A673 (cell line): ENCODE measurements at regions of chr3 and their contacts with region 1.

Region 1: GRCh38 chr3:56443372-56443771 is 24.9 kb downstream of the ERC2 start:
- DNase-seq: no peak
- H3K4me3 ChIP-seq: no peak overlapping the region
- H3K27ac ChIP-seq: no peak overlapping the region
- H3K4me1 ChIP-seq: no peaks in the 10 kb centered on the region
- H3K27me3 ChIP-seq: no peaks in the 10 kb centered on the region
- CTCF ChIP-seq: no peak

Region 2: DNA sequence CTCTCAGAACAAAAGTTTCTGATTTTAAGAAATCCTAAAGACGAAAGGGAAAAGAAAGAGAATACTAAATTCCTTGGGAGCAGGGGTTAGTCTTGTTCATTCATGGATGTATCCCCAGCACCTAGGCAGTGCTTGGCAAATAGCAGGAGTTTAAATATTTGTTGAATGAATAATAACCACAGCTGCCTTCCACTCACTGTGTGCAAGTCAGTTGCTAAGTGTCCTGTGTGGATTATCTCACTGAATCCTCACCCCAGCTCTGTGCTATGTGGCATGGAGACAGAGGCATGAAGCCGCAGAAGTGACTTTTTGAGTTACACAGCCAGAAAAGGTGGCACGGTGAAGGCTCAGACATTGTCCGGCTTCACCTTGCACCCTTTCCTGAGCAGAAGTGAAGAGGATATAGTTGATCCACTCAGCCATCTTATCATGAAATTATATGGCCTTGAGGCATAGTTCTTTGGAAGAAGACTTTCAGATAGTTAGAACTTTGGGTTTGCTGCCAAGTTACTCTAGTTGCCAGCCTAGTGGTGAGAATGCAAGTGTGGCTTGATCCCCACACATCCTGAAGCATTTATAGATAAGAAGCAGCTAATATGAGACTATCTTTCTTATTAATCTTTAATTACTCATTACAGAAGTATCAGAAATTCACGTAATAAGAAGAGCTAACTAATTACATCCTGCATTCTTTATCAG is 1871.0 kb before region 1 on chr3:
- CTCF ChIA-PET with region 1: no interaction called
- POLR2A ChIA-PET with region 1: no interaction called
- intact Hi-C with region 1: no loop called
- DNase-seq: no peak
- H3K4me3 ChIP-seq: no peak overlapping the region
- H3K27ac ChIP-seq: no peak overlapping the region
- H3K4me1 ChIP-seq: no peaks in the 10 kb centered on the region
- H3K27me3 ChIP-seq: no peaks in the 10 kb centered on the region
- CTCF ChIP-seq: no peak

Region 3: GRCh38 chr3:56003129-56003528 is 440.2 kb before region 1 on chr3:
- CTCF ChIA-PET with region 1: no interaction called
- POLR2A ChIA-PET with region 1: no interaction called
- intact Hi-C with region 1: no loop called
- DNase-seq: no peak
- H3K4me3 ChIP-seq: no peak overlapping the region
- H3K27ac ChIP-seq: no peak overlapping the region
- H3K4me1 ChIP-seq: no peaks in the 10 kb centered on the region
- H3K27me3 ChIP-seq: no peaks in the 10 kb centered on the region
- CTCF ChIP-seq: no peak

Region 4: DNA sequence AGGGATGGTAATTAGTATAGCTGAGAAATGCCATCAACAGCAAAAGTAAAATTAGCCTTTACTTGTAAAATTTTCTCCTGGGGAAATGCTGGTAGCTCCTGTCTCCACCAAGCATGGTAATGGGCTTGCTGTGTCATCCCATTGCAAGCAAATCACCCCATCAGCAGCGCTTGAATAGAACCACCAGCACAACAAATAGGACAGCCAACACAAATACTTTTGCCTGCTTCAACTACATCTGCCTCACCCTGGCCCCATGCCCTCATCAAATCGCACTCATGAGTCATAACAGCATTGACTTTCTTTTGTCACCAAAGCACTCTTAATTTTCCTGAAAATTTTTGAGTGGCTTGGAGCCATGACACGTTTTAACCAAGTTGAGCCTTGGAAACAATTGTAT is 27.7 kb before region 1 on chr3:
- CTCF ChIA-PET with region 1: no interaction called
- POLR2A ChIA-PET with region 1: interaction called, 24 read pairs
- intact Hi-C with region 1: no loop called
- DNase-seq: no peak
- H3K4me3 ChIP-seq: no peak overlapping the region
- H3K27ac ChIP-seq: no peak overlapping the region
- H3K4me1 ChIP-seq: no peaks in the 10 kb centered on the region
- H3K27me3 ChIP-seq: no peaks in the 10 kb centered on the region
- CTCF ChIP-seq: no peak

Region 5: GRCh38 chr3:56801662-56802377 is 358.4 kb after region 1 on chr3 and contains the start of gene ARHGEF3:
- CTCF ChIA-PET with region 1: no interaction called
- POLR2A ChIA-PET with region 1: no interaction called
- intact Hi-C with region 1: no loop called
- DNase-seq: peak; percentile 69
- H3K4me3 ChIP-seq: peak within 1 kb of the TSS; percentile 51
- H3K27ac ChIP-seq: no peak within 1 kb of the TSS
- H3K4me1 ChIP-seq: no peaks in the 10 kb centered on the region
- H3K27me3 ChIP-seq: no peaks in the 10 kb centered on the region
- CTCF ChIP-seq: peak; percentile 30; the same call in 1 of the 2 replicates
- total RNA-seq, gene ARHGEF3: 1.3 and 2.1 TPM in 2 replicates